GM12878 (cell line): ENCODE measurements at regions of chr1 and their contacts with region 1.

Region 1: DNA sequence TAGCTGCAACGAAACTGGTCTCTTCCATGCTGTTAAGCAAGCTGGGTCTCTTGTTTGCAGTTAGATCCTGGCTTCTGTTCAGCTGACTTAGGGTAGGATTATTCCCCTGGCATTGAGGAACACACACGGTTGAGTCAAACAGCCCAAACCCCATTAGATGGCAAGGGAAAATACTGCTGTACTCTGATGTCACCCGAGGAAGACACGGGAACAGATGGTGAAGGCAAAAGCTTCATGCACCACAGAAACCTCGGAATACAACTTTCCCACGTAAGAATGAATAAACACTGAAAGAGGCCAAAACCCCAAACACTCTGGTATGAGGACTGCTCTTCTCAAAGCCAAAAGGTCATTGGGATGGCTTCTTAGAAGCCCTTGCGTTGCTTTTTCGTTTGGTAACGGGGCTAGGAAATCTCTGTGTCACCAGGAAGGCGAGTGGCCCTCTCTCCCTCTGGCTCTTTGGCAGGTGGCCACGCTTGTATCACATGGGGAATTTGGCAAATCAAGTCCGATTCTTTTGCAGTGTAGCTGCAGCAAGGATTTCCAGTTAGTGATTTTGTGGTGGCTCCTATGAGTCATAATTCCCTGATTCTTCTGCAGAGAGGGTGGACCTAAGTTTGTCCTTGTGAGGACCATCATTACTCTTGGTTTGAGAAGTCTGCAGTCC is 16.7 kb upstream of the LYST start:
- DNase-seq: peak; percentile 76
- ATAC-seq: peak; percentile 50
- H3K4me3 ChIP-seq: peak overlapping the region; percentile 33
- H3K27ac ChIP-seq: peak overlapping the region; percentile 71
- H3K4me1 ChIP-seq: peaks cover 36% of the 10 kb centered on the region
- H3K27me3 ChIP-seq: no peaks in the 10 kb centered on the region
- CTCF ChIP-seq: no peak
- EP300 ChIP-seq: no peak
- POLR2A ChIP-seq: no peak
- RAD21 ChIP-seq: no peak

Region 2: DNA sequence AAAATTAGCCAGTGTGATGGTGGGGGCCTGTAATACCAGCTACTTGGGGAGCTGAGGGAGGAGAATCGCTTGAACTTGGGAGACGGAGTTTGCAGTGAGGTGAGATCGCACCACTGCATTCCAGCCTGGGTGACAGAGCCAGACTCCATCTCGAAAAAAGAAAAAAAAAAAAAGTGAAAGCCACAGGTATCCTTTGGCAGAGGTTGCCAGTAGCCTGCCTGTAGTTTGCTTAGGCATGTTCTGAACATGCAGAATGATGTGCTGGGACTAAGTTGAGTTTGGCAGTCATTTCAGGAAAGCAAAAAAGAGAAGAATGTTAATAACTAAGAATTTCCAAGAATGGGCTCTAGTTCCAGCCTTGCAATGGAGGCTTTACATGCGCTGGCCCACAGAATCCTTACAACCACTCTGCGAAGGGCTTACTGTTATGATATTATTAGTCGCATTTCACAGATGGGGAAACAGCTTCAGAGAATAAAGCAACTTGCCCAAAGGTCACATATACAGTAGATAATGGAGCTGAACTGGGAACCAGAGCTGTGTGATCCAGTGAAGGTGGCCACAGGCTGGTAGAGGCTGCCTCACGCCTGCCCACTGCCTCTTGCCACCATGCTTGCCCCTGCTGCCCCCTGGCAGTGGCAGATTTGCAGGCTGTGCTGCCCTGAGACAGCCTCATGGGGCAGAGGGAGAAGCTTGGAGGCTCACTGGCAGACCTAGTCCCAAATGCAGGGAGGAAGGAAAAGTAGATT is 49.8 kb after region 1 on chr1:
- CTCF ChIA-PET with region 1: interaction called, 3 read pairs
- POLR2A ChIA-PET with region 1: interaction called, 4 read pairs
- RAD21 ChIA-PET with region 1: interaction called, 3 read pairs
- SMC1A ChIA-PET with region 1: interaction called, 8 read pairs
- in situ Hi-C with region 1: no loop called
- intact Hi-C with region 1: loop called (anchors 5 kb)
- DNase-seq: no peak
- ATAC-seq: peak; percentile 60
- H3K4me3 ChIP-seq: no peak overlapping the region
- H3K27ac ChIP-seq: no peak overlapping the region
- H3K4me1 ChIP-seq: peaks cover 23% of the 10 kb centered on the region
- H3K27me3 ChIP-seq: no peaks in the 10 kb centered on the region
- CTCF ChIP-seq: peak in 2 of 3 experiments; percentile 6; a peak in 1 of 6 replicates
- EP300 ChIP-seq: no peak
- POLR2A ChIP-seq: no peak
- RAD21 ChIP-seq: no peak

Region 3: DNA sequence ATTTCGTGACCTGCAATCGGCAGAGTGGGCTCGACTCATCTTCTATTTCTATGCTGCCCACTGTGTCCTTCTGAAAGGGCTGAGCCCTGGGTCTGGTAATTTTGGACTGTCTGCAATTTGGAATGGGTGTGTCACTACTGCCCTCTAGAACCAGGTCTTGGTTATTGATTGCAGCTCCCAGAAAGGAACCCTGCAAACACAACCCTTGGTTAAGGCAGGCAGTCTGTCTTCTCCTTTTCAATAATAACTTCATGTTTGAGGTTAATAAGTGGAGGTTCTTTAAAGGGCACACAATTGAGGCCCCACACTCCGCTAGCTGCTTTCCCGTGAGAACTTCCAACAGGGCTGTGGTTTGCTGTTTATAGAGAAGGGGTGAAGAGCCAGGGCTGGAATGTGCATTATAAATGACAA is 63.2 kb after region 1 on chr1:
- CTCF ChIA-PET with region 1: interaction called, 8 read pairs
- POLR2A ChIA-PET with region 1: interaction called, 4 read pairs
- RAD21 ChIA-PET with region 1: interaction called, 5 read pairs
- SMC1A ChIA-PET with region 1: interaction called, 10 read pairs
- in situ Hi-C with region 1: no loop called
- intact Hi-C with region 1: loop called (anchors 5 kb)
- DNase-seq: no peak
- ATAC-seq: peak; percentile 86
- H3K4me3 ChIP-seq: no peak overlapping the region
- H3K27ac ChIP-seq: no peak overlapping the region
- H3K4me1 ChIP-seq: peaks cover 17% of the 10 kb centered on the region
- H3K27me3 ChIP-seq: no peaks in the 10 kb centered on the region
- CTCF ChIP-seq: peak; percentile 42 to 58 (median 55); a peak in 5 of 6 replicates
- EP300 ChIP-seq: no peak
- POLR2A ChIP-seq: no peak
- RAD21 ChIP-seq: peak; percentile 73

Region 4: DNA sequence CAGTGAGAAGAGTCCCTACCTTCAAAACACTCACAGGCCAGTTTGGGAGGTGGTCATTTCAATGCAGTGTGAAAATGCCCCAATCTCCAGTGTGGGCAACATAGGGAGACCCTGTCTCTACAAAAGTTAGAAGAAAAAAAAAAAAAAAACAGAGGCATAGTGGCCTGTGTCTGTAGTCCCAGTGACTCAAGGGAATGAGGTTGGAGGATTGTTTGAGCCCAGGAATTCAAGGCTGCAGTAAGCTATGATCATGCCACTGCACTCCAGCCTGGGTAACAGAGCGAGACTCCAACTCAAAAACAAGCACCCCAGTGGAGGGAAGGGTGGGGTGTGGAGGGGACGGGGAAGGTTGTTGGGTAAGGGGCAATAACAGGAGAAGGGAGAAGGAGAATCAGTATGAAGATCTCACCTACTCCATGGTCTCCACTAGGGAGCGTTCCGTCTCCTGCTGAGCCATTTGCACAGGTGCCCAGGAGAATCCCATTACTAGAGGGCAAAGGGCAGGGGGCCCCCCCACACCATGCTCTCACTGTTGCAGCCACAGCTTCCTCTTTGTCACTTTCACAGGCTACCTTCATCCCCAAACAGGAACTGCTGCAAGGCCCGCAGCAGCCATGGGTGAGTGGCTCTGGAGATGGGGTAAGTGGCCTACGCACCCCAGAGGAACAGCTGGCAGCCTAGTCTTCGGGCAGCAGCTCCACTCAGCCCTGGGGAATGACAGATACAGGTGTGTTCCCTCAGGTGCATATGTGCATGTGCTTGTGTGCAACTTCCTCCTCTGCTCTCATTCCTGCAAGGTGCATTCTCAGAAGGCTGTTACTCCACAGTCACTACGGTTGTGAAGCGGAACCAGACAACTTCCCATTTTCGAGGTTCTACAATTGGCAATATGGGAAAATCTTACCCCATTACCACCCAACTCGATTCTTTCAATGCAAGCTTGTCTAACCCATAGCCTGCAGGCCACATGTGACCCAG is 71.2 kb after region 1 on chr1:
- CTCF ChIA-PET with region 1: interaction called, 8 read pairs
- POLR2A ChIA-PET with region 1: interaction called, 6 read pairs
- RAD21 ChIA-PET with region 1: interaction called, 9 read pairs
- SMC1A ChIA-PET with region 1: interaction called, 6 read pairs
- in situ Hi-C with region 1: no loop called
- intact Hi-C with region 1: loop called (anchors 5 kb)
- DNase-seq: peak; percentile 87
- ATAC-seq: peak; percentile 94
- H3K4me3 ChIP-seq: no peak overlapping the region
- H3K27ac ChIP-seq: peak overlapping the region; percentile 73
- H3K4me1 ChIP-seq: peaks cover 37% of the 10 kb centered on the region
- H3K27me3 ChIP-seq: no peaks in the 10 kb centered on the region
- CTCF ChIP-seq: peak; percentile 27 to 35 (median 33); a peak in 4 of 6 replicates
- EP300 ChIP-seq: peak; percentile 80 to 93
- POLR2A ChIP-seq: no peak
- RAD21 ChIP-seq: peak; percentile 16

Region 5: DNA sequence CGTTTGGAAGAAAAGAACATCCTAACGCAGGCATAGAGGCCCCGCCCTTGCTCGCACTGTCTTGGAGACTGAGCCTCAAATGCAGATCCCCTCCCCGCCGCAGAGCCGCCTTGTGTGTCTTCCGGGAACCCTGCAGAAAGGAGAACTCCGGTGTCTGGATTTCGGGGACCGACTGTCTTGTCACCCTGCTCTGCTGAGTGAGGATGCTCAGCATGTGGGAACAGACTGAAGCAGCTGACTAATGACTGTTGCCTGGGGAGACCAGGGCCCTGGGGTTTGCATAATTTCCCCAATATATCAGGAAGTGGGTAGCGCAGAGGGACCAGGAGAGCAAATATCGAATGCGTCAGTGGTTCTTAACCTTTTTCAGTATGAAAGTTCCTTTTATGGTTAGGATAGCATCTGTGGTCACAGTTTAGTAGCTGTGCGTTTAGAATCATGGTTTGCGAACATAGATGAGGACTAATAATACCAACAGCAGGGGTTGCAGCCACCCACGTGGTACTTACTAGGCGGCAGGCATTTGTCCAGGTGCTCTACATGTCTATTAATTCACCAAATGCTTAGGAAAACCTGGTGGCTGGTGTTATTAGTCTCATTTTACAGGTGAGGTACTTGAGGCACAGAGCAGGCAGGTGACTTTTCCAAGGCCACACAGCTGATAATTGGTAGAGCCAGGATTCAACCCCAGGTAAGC is 273.3 kb after region 1 on chr1:
- CTCF ChIA-PET with region 1: no interaction called
- POLR2A ChIA-PET with region 1: no interaction called
- RAD21 ChIA-PET with region 1: no interaction called
- SMC1A ChIA-PET with region 1: no interaction called
- in situ Hi-C with region 1: loop called (anchors 10 kb)
- intact Hi-C with region 1: no loop called
- DNase-seq: peak; percentile 99
- ATAC-seq: peak; percentile 74
- H3K4me3 ChIP-seq: peak overlapping the region; percentile 46; the same call in 1 of the 2 replicates
- H3K27ac ChIP-seq: peak overlapping the region; percentile 99
- H3K4me1 ChIP-seq: peaks cover 61% of the 10 kb centered on the region
- H3K27me3 ChIP-seq: no peaks in the 10 kb centered on the region
- CTCF ChIP-seq: no peak
- EP300 ChIP-seq: peak; percentile 100
- POLR2A ChIP-seq: peak; percentile 67; the same call in 1 of the 2 replicates
- RAD21 ChIP-seq: 0 out of 2 replicates have a peak, but pooled peaks have one; percentile 4

Region 6: GRCh38 chr1:236281654-236282424 is 398.4 kb after region 1 on chr1 and contains the start of gene ERO1B:
- CTCF ChIA-PET with region 1: no interaction called
- POLR2A ChIA-PET with region 1: no interaction called
- RAD21 ChIA-PET with region 1: no interaction called
- SMC1A ChIA-PET with region 1: no interaction called
- in situ Hi-C with region 1: loop called (anchors 10 kb)
- intact Hi-C with region 1: no loop called
- DNase-seq: peak; percentile 73
- ATAC-seq: peak; percentile 86
- H3K4me3 ChIP-seq: peak within 1 kb of the TSS; percentile 85
- H3K27ac ChIP-seq: peak within 1 kb of the TSS; percentile 88
- H3K4me1 ChIP-seq: peaks cover 33% of the 10 kb centered on the region
- H3K27me3 ChIP-seq: no peaks in the 10 kb centered on the region
- CTCF ChIP-seq: no peak
- EP300 ChIP-seq: no peak
- POLR2A ChIP-seq: peak; percentile 99
- RAD21 ChIP-seq: no peak
- polyA plus RNA-seq, gene ERO1B: 9.0 to 9.6 TPM